ENCODE measurements at regions of chr2 and their contacts with region 1.

Region 1: GRCh38 chr2:197804049-197804757 is at the start of gene PLCL1:
- DNase-seq: peak; percentile 90 to 93 (median 92)
- ATAC-seq: peak; percentile 99
- H3K4me3 ChIP-seq: peak within 1 kb of the TSS; percentile 38
- H3K4me1 ChIP-seq: peaks cover 7% of the 10 kb centered on the region
- CTCF ChIP-seq: no peak
- total RNA-seq, gene PLCL1: 1.6 to 10.6 (median 2.0) TPM

Region 2: DNA sequence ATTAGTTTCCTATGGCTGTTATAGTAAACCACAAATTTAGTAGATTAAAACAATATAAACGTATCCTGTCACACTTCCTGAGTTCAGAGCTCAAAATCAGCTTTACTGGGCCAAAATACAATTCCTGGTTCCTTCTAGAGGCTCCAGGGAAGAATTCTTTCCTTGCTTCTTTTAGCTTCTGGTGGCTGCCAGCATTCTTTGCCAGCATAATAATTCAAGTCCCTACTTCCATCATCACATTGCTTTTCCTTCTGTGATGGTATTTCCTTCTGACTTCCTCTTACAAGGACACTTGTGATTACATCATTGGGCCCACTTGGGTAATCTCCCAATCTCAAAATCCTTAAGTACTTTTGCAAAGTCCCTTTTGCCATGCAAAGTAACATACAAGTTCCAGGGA is 247.7 kb before region 1 on chr2:
- intact Hi-C with region 1: no loop called
- DNase-seq: no peak
- ATAC-seq: no peak
- H3K4me3 ChIP-seq: no peak overlapping the region
- H3K4me1 ChIP-seq: no peaks in the 10 kb centered on the region
- CTCF ChIP-seq: no peak

Region 3: DNA sequence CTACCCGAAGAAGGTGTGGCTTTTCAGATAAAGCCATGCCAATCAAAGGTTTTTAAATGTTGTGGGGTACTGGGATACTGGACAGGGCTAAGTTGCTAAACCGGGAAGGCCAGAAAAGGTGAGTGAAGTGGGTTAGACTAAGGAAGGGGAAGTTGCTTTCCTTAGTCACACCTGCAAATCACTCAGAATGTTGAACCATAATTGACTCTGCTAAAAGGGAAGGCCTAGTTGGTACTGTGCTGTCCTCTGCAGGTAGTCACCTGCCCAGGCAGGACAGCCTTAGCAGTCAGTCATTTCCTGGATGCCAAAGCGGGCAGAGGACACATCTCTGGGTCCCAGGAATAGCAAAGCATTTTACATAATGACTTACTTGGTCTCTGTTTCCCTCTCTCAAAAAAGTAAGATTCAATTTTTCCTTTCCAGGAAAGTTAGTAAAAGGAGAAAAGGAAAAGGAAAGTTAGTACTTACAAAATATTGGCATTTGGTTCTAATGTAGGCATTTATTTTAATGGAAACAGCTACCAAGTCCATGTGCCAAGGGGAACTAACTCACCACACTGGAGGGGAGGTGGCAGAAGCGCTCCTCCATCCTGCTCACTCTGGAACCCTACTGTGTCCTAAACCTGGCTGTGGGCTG is 189.1 kb before region 1 on chr2:
- intact Hi-C with region 1: no loop called
- DNase-seq: peak in 2 of 3 donors; percentile 49 to 55
- ATAC-seq: peak; percentile 96
- H3K4me3 ChIP-seq: no peak overlapping the region
- H3K4me1 ChIP-seq: peaks cover 13% of the 10 kb centered on the region
- CTCF ChIP-seq: peak; percentile 29

Region 4: DNA sequence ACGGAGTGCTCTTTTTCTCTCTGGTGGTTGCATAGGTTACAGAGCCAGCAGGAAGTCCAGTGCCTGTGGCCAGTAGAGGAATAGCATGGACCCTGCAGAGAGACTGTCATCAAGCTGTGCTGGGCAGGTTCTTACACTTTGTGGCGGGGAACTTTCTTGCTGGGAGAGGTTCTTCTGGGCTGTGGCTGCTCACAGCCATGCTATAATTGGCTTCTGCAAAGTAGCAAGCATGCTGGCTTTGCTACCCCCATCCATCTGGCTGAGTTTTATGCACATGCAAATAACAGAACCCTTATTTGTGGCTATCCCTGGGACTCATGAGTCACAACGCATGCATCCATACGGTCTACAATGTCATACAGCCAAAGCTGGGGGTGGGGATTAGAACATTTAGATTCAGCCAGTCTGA is 69.1 kb after region 1 on chr2:
- intact Hi-C with region 1: no loop called
- DNase-seq: no peak
- ATAC-seq: no peak
- H3K4me3 ChIP-seq: no peak overlapping the region
- H3K4me1 ChIP-seq: no peaks in the 10 kb centered on the region
- CTCF ChIP-seq: no peak

Region 5: DNA sequence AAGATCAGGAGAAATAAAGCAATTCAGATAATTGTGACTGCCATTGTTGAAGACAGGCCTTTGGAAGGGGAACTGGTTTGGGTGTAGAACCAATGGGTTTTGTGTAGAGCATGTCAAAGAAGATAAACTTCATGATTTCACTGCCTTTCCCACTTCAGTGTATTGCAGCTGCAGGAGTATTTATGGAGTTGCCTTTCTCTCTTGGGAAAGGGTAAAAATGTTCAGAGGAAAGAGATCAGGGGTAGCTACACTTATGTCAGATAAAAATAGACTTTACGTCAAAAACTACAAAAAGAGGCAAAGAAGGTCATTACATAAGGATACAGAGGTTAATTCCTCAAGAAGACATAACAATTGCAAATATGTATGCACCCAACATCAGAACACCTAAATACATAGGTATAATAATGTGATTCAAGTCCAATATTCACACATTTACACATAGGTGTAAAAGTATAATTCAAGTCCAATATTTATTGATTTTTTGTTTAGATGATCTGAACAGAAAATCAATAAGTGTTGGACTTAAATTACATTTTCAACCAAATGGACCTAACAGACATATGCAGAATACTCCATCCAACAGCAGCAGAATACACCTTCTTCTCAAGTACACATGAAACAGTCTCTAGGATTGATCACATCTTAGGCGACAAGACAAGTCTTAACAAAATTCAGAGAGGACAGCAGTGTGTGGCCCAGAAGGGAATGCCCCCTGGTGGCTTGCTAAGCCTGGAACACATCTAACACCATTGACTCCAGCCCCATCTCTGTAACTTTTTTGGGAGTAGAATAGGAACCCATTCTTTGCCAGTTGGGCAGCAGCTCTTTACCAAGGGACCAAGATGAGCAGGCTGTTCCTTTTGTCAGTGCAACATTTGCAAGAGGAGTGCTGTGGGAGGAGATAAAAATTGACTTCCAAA is 249.8 kb after region 1 on chr2:
- intact Hi-C with region 1: loop called in 1 of 2 experiments (anchors 10 kb)
- DNase-seq: peak in 2 of 3 donors; percentile 18 to 62
- ATAC-seq: peak; percentile 33
- H3K4me3 ChIP-seq: no peak overlapping the region
- H3K4me1 ChIP-seq: no peaks in the 10 kb centered on the region
- CTCF ChIP-seq: no peak

Region 6: GRCh38 chr2:198127627-198128026 is 323.4 kb after region 1 on chr2:
- intact Hi-C with region 1: loop called (anchors 2 to 10 kb)
- DNase-seq: peak in 2 of 3 donors; percentile 16 to 19
- ATAC-seq: peak; percentile 43
- H3K4me3 ChIP-seq: no peak overlapping the region
- H3K4me1 ChIP-seq: no peaks in the 10 kb centered on the region
- CTCF ChIP-seq: no peak

Region 7: DNA sequence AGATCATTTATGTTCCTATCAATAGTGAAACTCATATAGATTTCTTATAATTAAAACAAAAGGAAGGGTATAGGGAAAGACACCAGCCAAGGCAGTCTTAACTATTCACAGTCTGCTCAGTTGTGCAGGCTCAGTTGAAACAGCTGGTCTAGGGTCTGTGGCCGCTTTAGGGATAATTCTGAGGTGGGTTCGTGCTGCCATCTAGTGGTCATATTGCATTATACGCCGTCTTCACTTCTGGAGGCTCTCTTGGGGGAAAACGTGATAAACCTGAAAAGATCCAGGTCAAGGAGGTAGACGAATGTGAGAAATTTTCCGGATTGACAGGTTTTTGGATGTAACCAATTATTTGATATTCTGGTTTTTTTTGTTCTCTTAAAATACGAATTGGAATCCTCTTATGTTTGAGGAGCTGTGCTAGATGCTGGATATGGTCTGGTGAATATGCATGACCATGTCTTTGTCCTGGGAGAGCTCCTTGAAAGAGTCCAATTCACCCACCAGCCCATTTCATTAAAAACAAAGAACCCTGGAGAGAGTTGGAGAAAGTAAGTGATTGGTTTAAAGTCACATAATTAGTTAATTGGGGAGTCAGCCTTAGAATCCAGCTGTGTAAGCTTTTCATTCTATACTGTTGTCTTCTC is 492.6 kb after region 1 on chr2:
- intact Hi-C with region 1: loop called (anchors 5 kb)
- DNase-seq: peak in 1 of 3 donors; percentile 69
- ATAC-seq: peak; percentile 73
- H3K4me3 ChIP-seq: no peak overlapping the region
- H3K4me1 ChIP-seq: no peaks in the 10 kb centered on the region
- CTCF ChIP-seq: peak; percentile 42

Measured in mucosa of descending colon (tissue), 3 donors.